ENCODE measurements at regions of chr3 and their contacts with region 1.

Region 1: DNA sequence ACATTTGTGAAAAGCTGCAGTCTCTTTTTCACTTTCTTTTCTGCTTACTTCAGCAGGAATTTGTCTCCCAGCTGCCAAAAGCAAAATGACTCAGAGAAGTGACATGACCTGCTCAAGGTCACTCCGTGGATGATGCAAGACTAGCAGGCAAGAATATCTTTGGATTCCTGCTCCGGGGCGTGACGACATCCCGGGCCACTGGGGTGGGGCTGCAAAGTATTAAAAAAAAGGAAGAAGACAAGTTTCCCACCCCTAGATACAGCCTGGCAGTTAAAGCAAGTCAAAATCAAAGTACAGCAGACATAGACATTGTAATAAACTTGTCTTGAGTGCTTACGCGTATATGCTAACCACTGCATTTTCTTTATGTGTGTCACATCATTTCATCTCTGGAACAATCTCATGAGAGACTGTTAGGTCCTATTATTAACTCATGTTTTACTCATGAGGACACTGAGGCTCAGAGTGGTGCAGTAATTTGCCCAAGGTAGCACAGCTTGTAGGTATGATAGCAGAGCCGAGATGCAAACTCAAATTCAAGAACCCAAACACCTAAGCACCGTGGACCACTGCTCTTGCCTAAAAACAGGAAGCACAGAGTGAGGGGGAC is 485.2 kb upstream of the PROK2 start:
- DNase-seq: peak; percentile 96
- ATAC-seq: peak; percentile 41
- H3K4me3 ChIP-seq: no peak overlapping the region
- H3K27ac ChIP-seq: peak overlapping the region; percentile 2; the same call in 1 of the 2 replicates
- H3K4me1 ChIP-seq: peaks cover 21% of the 10 kb centered on the region
- H3K27me3 ChIP-seq: peaks cover 7% of the 10 kb centered on the region
- CTCF ChIP-seq: no peak
- POLR2A ChIP-seq: no peak
- RAD21 ChIP-seq: no peak; the same call in 1 of the 2 replicates

Region 2: GRCh38 chr3:71875461-71875947 is 394.7 kb before region 1 on chr3:
- CTCF ChIA-PET with region 1: no interaction called
- POLR2A ChIA-PET with region 1: no interaction called
- dilution Hi-C with region 1: no loop called
- in situ Hi-C with region 1: no loop called
- intact Hi-C with region 1: loop called (anchors 1 kb)
- DNase-seq: peak; percentile 53
- ATAC-seq: peak; percentile 99
- H3K4me3 ChIP-seq: no peak overlapping the region
- H3K27ac ChIP-seq: no peak overlapping the region
- H3K4me1 ChIP-seq: no peaks in the 10 kb centered on the region
- H3K27me3 ChIP-seq: peaks cover 6% of the 10 kb centered on the region
- CTCF ChIP-seq: peak; percentile 81
- POLR2A ChIP-seq: 0 out of 2 replicates have a peak, but pooled peaks have one; percentile 27
- RAD21 ChIP-seq: peak; percentile 84

Region 3: DNA sequence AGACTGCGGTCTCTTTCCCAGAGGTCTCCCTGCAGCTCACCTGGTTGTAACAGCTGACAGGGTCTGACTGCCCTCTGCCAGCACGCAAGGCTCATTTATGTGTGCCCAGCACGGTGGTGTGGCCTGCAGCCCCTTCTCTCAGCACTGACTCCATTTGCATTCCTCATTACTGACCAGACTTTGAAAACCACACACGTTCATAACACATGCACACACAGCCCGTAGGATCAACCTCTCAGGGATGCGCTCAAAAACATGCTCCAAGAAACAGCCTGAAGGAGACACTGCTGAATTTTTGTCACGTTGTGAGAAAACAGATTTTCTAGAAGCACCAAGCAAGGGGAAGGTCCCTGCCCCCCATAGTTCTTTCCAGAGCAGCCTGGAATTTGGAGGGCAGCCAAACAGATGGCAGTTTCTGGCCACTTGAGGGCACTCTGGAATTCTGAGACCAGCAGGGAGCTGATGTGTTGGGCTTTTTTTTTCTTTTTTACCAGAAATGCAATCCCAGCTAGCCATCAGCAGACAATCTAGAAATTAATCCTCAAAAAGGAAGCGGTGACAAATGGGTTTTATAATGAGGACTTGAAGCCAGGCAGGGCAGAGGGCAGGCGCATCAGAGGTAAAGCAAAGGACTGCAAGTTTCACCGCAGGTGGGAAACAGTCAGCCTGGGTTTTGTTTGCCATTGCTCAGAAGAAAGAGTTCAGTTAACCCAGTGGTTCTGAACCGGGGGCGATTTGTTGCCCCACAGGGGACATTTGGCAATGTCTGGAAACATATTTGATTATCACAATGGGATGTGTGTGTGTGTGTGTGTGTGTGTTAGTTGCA is 314.7 kb before region 1 on chr3:
- CTCF ChIA-PET with region 1: no interaction called
- POLR2A ChIA-PET with region 1: no interaction called
- dilution Hi-C with region 1: no loop called
- in situ Hi-C with region 1: no loop called
- intact Hi-C with region 1: loop called (anchors 1 kb)
- DNase-seq: peak; percentile 70
- ATAC-seq: peak; percentile 85
- H3K4me3 ChIP-seq: no peak overlapping the region
- H3K27ac ChIP-seq: no peak overlapping the region
- H3K4me1 ChIP-seq: no peaks in the 10 kb centered on the region
- H3K27me3 ChIP-seq: peaks cover 12% of the 10 kb centered on the region
- CTCF ChIP-seq: peak; percentile 74
- POLR2A ChIP-seq: no peak
- RAD21 ChIP-seq: peak; percentile 87

Region 4: GRCh38 chr3:72177083-72178050 is 92.8 kb before region 1 on chr3:
- CTCF ChIA-PET with region 1: no interaction called
- POLR2A ChIA-PET with region 1: no interaction called
- dilution Hi-C with region 1: no loop called
- in situ Hi-C with region 1: no loop called
- intact Hi-C with region 1: no loop called
- DNase-seq: peak; percentile 13
- ATAC-seq: peak; percentile 68
- H3K4me3 ChIP-seq: no peak overlapping the region
- H3K27ac ChIP-seq: no peak overlapping the region
- H3K4me1 ChIP-seq: no peaks in the 10 kb centered on the region
- H3K27me3 ChIP-seq: peaks cover 24% of the 10 kb centered on the region
- CTCF ChIP-seq: no peak
- POLR2A ChIP-seq: no peak
- RAD21 ChIP-seq: no peak

Region 5: DNA sequence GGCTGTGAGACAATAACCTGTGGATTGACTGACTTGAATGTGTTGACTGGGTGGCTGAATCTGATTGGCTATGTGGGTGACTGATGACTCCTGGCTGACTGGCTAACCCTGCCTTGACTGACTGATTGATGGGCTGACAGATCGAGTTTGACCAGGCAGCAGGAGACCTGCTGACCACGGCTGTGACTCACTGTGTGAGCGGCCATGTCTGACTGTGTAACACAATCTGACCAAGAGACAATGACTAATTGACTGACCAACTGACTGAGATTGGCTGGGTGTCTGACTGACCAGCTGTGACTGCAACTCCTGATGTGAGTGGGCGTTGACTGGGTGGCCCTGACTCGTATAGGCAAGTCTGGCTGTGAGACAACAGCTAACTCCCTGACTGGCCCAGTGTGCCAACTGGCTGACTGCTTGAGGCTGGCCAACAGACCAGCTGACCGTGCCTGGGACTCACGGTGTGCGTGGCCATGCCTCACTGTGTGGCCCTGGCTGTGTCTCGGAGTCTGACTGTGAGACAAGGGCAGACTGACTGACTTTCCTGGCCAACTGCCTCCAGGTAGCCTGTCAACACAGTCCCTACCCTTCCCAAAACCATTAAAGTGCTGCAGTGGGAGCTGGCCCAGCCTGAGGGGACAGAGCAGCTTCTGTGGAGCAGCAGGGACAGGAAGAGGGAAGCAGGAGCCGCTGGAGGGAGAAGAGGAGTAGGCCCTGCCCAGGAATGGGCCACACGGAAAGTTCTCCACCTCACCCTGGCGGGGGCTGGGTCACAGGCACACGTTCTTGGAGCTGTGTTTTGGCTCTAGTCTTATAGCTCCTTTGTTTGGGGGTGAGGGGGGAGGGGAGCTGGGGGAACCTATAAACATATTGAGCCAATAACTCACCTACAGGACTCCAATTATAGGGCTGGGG is 69.2 kb after region 1 on chr3:
- CTCF ChIA-PET with region 1: no interaction called
- POLR2A ChIA-PET with region 1: no interaction called
- dilution Hi-C with region 1: no loop called
- in situ Hi-C with region 1: no loop called
- intact Hi-C with region 1: loop called (anchors 5 kb)
- DNase-seq: peak; percentile 97
- ATAC-seq: peak; percentile 86
- H3K4me3 ChIP-seq: no peak overlapping the region
- H3K27ac ChIP-seq: peak overlapping the region; percentile 27
- H3K4me1 ChIP-seq: peaks cover 15% of the 10 kb centered on the region
- H3K27me3 ChIP-seq: no peaks in the 10 kb centered on the region
- CTCF ChIP-seq: no peak
- POLR2A ChIP-seq: no peak
- RAD21 ChIP-seq: no peak

Region 6: DNA sequence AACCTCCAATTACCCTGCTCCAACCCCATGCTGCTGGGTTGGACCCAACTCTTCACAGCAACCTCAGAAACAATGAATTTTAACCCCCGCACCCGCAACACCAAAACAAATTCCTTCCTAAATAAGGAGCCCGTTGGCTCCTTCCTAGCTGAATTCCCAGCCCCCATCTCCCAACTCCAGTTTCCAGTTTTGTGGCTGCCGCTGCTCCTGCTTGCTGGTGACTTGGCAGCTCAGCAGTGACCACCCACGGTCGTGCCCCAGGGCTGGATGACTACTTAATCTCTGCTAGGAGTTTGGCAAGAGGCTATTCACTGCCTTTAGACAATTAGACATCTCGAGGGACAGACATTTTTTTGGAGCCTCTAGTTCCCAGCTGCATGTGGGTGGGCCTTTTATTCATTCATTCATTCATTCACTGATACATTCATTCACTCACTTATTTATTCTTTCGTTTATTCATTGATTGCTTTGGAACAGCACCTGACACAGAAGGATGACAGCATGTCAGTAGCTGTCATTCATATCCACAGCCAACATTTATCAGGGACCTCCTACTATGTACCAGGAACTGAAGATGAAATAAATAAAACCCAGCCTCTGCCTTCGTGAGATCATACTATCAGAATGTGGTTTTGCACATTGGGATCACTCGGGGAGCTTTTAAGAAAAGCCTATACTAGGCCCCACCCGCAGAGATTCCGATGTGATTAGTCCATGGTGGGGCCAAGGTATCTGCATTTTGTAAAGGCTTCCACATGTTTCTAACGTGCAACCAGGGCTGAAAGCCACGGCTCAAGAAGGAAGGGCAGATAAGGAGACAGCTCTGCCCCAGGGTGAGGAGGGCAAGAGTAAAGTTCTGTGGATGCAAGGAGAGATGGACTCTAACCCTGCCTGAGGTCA is 321.6 kb after region 1 on chr3:
- CTCF ChIA-PET with region 1: no interaction called
- POLR2A ChIA-PET with region 1: no interaction called
- dilution Hi-C with region 1: no loop called
- in situ Hi-C with region 1: no loop called
- intact Hi-C with region 1: loop called (anchors 2 kb)
- DNase-seq: peak; percentile 69
- ATAC-seq: peak; percentile 77
- H3K4me3 ChIP-seq: no peak overlapping the region
- H3K27ac ChIP-seq: no peak overlapping the region
- H3K4me1 ChIP-seq: peaks cover 3% of the 10 kb centered on the region
- H3K27me3 ChIP-seq: no peaks in the 10 kb centered on the region
- CTCF ChIP-seq: no peak
- POLR2A ChIP-seq: no peak
- RAD21 ChIP-seq: no peak; the same call in 1 of the 2 replicates